Spleen (tissue), 13 donors: ENCODE measurements at regions of chr18 and their contacts with region 1.

Region 1: GRCh38 chr18:9334329-9334972 is at the start of gene TWSG1:
- DNase-seq: peak; percentile 98
- H3K4me3 ChIP-seq: peak within 1 kb of the TSS; percentile 66 to 94 (median 84)
- H3K27ac ChIP-seq: peak within 1 kb of the TSS; percentile 66 to 89 (median 83)
- H3K4me1 ChIP-seq: peaks cover 0 to 38% (median 19%) of the 10 kb centered on the region in 6 donors
- H3K27me3 ChIP-seq: peaks cover 0 to 7% (median 0%) of the 10 kb centered on the region in 7 donors
- CTCF ChIP-seq: peak in 10 of 11 experiments; percentile 4 to 82 (median 64)
- POLR2A ChIP-seq: no peak
- total RNA-seq, gene TWSG1: 16.1 to 28.5 (median 18.0) TPM

Region 2: DNA sequence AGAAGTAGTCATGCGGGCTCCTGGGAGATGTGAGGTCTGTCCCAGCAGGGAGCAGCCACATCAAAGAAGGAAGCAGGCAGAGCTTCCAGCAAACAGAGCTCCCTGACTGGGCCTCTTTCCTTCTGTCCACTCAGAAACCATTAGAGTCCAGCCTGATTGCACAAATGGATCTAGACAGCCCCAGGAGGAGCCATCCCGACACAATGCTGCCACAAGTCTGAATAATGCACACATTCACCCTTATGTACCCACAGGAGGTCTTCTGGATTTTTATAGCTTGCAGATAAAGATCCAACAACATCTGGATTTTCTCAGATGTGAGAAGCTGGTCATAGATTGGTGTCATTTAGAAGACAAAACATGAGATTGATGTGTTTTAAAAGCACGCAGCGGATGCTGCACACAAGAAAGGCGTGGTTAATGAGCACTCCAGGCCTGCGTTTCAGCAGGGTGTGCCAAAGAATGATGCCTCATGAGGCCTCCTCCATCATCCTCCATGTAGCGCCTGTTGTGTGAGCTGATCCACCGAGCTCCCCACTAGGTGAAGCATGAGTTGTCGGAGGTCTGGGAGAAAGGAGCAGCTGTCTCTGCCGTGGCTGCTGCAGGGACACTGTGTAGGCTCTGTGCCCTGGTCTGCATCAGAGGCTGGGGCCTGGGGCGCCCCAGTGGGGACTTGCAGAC is 568.5 kb before region 1 on chr18:
- intact Hi-C with region 1: no loop called
- DNase-seq: no peak
- H3K4me3 ChIP-seq: no peak overlapping the region
- H3K27ac ChIP-seq: no peak overlapping the region
- H3K4me1 ChIP-seq: no peaks in the 10 kb centered on the region
- H3K27me3 ChIP-seq: no peaks in the 10 kb centered on the region
- CTCF ChIP-seq: no peak
- POLR2A ChIP-seq: no peak

Region 3: DNA sequence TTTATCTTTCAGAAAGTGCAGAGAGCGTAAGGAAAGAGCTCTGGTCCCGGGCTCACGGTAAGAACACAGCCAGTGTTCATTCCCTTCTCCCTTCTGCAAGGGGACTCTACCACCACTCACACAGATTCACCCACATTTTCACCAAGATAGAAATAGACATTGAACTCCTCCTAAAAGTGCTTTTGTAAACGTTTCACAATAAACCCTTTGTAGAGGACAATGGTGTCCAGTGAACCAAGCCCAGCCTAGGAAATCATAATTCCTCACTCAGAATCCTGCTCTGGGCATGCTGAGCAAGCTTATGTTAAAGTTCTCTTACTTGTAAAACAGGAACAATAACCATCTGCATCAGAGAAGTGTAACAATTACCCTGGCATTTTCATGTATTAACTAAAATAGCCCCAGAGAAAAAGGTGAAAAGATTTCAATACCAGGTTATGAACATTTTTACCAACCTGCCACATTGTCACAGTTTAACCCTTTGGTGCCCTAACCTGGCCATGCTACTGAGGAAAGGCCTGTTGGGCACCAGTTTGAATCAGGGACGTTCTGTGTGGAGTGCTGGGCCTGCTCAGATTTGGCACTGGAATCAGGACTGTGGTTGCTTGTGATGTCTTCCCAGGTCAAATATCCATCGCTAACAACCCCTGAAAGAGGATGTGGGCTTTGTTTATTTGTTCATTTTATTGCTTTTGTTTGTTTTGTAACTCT is 254.5 kb before region 1 on chr18:
- intact Hi-C with region 1: loop called (anchors 10 kb)
- DNase-seq: no peak
- H3K4me3 ChIP-seq: no peak overlapping the region
- H3K27ac ChIP-seq: peak overlapping the region in 4 of 8 donors; percentile 6 to 63 (median 44)
- H3K4me1 ChIP-seq: peaks cover 9 to 36% (median 24%) of the 10 kb centered on the region in 6 donors
- H3K27me3 ChIP-seq: no peaks in the 10 kb centered on the region
- CTCF ChIP-seq: no peak
- POLR2A ChIP-seq: no peak

Region 4: DNA sequence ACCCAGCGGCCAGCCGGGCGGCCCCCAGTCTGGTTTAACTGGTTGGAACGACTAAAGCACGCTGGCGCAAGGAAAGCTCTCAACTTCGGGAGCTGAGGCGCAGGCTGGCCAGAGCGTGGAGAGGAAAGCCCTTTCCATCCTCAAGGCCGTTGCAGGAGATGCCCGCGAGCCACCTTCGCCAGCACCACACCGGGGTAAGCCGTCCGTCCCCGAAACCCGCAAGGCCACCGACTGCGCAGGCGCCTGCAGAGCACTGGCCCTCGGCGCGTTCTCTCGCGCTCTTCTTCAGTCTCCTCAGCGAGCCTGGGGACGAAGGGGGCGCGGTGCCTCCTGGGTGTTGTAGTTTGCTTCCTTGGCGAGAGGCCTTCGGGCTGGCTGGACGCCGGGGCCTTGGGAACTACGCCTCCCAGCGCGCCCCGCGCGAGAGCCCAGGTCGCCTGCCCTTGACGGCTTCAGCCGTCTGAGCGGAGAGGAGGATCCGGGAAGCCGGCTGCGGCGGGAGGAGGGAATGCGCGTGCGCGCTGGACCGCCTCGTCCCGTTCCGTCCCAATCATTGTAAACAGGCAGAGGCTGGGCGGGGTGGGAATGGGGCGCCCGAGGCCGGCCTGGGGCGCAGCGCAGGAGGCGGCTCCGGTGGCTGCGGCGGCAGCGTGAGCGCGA is 140.7 kb after region 1 on chr18 and contains the start of gene RALBP1:
- intact Hi-C with region 1: loop called (anchors 10 kb)
- DNase-seq: peak; percentile 100
- H3K4me3 ChIP-seq: peak within 1 kb of the TSS; percentile 86 to 99 (median 92)
- H3K27ac ChIP-seq: peak within 1 kb of the TSS; percentile 82 to 98 (median 94)
- H3K4me1 ChIP-seq: peaks cover 9 to 44% (median 24%) of the 10 kb centered on the region in 6 donors
- H3K27me3 ChIP-seq: no peaks in the 10 kb centered on the region
- CTCF ChIP-seq: peak in 5 of 11 experiments; percentile 4 to 37 (median 28)
- POLR2A ChIP-seq: peak in 1 of 3 donors; percentile 61
- total RNA-seq, gene RALBP1: 44.3 to 76.4 (median 54.0) TPM